ENCODE measurements at regions of chr16 and their contacts with region 1.

Region 1: GRCh38 chr16:76941113-76941512 is 249.9 kb upstream of the MON1B start:
- DNase-seq: peak; percentile 26
- ATAC-seq: no peak; the same call in 1 of the 2 replicates
- H3K4me3 ChIP-seq: no peak overlapping the region
- H3K27ac ChIP-seq: no peak overlapping the region
- H3K4me1 ChIP-seq: no peaks in the 10 kb centered on the region
- H3K27me3 ChIP-seq: no peaks in the 10 kb centered on the region
- CTCF ChIP-seq: no peak
- POLR2A ChIP-seq: no peak
- RAD21 ChIP-seq: no peak

Region 2: DNA sequence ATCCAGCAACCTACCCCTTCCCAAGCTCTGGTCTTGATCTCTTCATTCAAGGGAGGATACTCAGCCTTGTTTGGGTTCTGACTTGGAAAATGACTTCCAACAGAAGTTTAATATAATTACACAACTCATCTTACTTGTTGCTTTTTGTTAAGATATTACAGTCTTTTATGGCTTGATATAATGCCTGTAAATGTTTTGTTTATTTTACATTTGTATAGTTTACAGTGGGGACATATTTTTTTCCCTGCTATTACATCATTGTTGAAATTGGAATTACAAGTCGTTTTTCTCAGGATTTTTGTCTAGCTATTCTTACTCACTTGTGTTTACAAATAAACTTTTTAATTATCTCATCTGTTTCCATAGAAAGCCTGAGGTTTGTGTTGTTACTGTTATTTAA is 227.9 kb before region 1 on chr16:
- CTCF ChIA-PET with region 1: no interaction called
- POLR2A ChIA-PET with region 1: no interaction called
- dilution Hi-C with region 1: no loop called
- in situ Hi-C with region 1: no loop called
- intact Hi-C with region 1: no loop called
- DNase-seq: no peak
- ATAC-seq: no peak
- H3K4me3 ChIP-seq: no peak overlapping the region
- H3K27ac ChIP-seq: no peak overlapping the region
- H3K4me1 ChIP-seq: no peaks in the 10 kb centered on the region
- H3K27me3 ChIP-seq: no peaks in the 10 kb centered on the region
- CTCF ChIP-seq: no peak
- POLR2A ChIP-seq: no peak
- RAD21 ChIP-seq: no peak

Region 3: DNA sequence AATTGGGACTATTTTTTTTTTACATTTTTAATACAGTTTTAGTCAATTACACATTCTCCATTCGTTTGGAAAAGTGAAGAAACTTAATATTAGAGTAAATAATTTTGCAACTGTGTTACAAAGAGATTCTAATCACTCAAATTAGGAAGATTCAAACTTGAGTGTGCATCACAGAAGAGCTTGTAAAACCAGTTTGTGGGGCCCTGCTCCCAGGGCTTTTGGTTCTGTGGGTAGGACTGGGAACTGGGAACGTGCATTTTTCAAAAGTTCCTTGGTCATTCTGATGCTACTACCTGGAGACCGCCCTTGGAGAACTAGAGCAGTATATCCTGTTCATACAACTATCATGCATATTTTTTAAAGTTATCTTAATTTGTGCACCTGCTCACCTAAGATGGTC is 16.8 kb before region 1 on chr16:
- CTCF ChIA-PET with region 1: interaction called, 10 read pairs
- POLR2A ChIA-PET with region 1: no interaction called
- dilution Hi-C with region 1: no loop called
- in situ Hi-C with region 1: no loop called
- intact Hi-C with region 1: no loop called
- DNase-seq: no peak
- ATAC-seq: no peak
- H3K4me3 ChIP-seq: no peak overlapping the region
- H3K27ac ChIP-seq: no peak overlapping the region
- H3K4me1 ChIP-seq: no peaks in the 10 kb centered on the region
- H3K27me3 ChIP-seq: no peaks in the 10 kb centered on the region
- CTCF ChIP-seq: no peak
- POLR2A ChIP-seq: no peak
- RAD21 ChIP-seq: no peak

Region 4: DNA sequence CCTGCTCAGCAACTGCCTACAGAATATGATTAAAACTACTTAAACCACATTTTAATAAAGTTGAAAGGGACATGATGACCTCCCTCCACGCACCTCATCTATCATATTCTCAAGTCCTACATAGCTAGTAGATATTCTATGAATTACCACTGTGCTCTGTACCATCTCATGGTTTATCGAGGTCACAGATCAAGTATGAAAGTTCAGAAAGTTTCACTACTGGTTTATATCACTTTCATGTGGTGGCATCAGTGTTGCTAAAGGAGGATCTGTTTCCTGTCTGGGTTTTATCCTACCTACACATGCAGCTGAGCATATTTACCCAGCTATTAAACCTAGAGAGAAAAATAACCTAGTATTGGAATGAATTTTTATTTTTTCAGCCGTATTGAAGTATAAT is 35.0 kb after region 1 on chr16:
- CTCF ChIA-PET with region 1: no interaction called
- POLR2A ChIA-PET with region 1: no interaction called
- dilution Hi-C with region 1: no loop called
- in situ Hi-C with region 1: no loop called
- intact Hi-C with region 1: no loop called
- DNase-seq: no peak
- ATAC-seq: no peak
- H3K4me3 ChIP-seq: no peak overlapping the region
- H3K27ac ChIP-seq: no peak overlapping the region
- H3K4me1 ChIP-seq: no peaks in the 10 kb centered on the region
- H3K27me3 ChIP-seq: no peaks in the 10 kb centered on the region
- CTCF ChIP-seq: no peak
- POLR2A ChIP-seq: no peak
- RAD21 ChIP-seq: no peak

Measured in IMR-90 (cell line).